ENCODE measurements at regions of chr18 and their contacts with region 1.

Region 1: DNA sequence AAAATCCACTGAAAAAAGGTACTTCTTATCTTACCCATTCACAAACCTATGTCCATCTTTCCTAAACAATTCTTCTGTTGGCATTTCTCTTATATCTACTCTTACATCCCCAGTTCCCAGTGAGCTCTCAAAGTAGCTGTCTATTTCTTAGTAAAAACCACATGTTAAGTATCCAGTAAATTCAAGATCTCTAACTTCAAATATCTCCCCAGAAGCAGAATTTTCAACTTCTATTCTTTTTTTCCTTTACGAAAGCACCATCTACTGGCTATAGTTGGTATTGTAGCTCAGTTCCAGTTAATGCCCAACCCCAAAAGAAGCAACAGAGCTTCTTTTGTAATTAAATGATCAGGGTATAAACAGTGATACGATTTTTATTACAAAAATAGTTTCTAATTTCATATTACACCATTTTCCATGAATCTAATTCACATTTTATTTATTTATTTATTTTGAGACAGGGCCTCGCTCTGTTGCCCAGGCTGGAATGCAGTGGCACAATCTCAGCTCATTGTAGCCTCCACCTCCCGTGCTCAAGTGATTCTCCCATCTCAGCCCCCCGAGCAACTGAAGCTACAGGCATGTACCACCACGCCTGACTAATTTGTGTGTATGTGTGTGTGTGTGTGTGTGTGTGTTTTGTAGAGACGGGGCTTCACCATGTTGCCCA is 28.5 kb downstream of the HRH4 start:
- DNase-seq: no peak
- H3K4me3 ChIP-seq: no peak overlapping the region
- H3K27ac ChIP-seq: no peak overlapping the region
- H3K4me1 ChIP-seq: no peaks in the 10 kb centered on the region
- H3K27me3 ChIP-seq: no peaks in the 10 kb centered on the region
- CTCF ChIP-seq: peak; percentile 34 to 80 (median 79)

Region 2: GRCh38 chr18:24176727-24177416 is 312.1 kb before region 1 on chr18:
- intact Hi-C with region 1: loop called (anchors 5 kb)
- DNase-seq: peak in 1 of 2 donors; percentile 69
- H3K4me3 ChIP-seq: no peak overlapping the region
- H3K27ac ChIP-seq: no peak overlapping the region
- H3K4me1 ChIP-seq: no peaks in the 10 kb centered on the region
- H3K27me3 ChIP-seq: no peaks in the 10 kb centered on the region
- CTCF ChIP-seq: peak in 2 of 3 experiments; percentile 53 to 78

Region 3: DNA sequence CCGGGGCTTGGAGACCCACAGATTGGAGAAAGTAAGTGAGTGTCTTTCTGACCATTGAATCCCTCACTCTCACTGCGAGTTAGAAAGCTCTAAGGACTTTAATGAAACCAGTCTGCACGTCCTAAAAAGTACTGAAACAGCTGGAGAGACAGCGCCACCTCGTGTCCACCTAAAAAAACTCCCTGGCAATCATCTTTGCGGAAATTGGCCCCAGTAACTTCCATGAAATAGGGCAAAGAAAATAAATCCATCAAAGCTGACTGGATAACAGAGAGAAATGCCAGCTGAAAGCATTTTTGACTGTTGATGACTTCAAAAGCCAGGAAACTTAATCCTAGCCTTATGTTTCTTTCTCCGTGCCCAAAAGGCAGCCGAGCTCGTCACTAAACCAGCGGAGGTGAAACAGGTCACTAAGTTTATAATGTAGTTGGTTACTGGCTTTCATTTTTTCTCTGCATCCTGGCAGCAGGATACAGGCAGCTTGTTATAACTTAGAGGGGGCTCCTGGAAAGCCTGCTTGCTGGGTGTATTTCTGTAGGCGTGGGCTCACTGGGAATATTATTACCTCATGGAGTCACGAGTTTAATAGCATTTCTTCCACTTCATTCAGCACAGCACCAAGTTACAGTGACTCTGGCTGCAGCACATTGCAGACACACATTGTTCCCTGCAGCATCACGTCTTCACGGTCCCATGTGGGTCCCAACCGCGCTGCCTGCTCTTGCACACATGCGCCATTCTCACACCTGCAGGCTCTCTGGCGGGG is 238.0 kb after region 1 on chr18:
- intact Hi-C with region 1: loop called (anchors 2 kb)
- DNase-seq: no peak
- H3K4me3 ChIP-seq: peak overlapping the region; percentile 26 to 60
- H3K27ac ChIP-seq: peak overlapping the region in 1 of 2 donors; percentile 52
- H3K4me1 ChIP-seq: no peaks in the 10 kb centered on the region
- H3K27me3 ChIP-seq: no peaks in the 10 kb centered on the region
- CTCF ChIP-seq: peak; percentile 41 to 88 (median 73)

Measured in ascending aorta (tissue), 2 donors.